Aorta (tissue), 5 donors: ENCODE measurements at regions of chr12 and their contacts with region 1.

Region 1: DNA sequence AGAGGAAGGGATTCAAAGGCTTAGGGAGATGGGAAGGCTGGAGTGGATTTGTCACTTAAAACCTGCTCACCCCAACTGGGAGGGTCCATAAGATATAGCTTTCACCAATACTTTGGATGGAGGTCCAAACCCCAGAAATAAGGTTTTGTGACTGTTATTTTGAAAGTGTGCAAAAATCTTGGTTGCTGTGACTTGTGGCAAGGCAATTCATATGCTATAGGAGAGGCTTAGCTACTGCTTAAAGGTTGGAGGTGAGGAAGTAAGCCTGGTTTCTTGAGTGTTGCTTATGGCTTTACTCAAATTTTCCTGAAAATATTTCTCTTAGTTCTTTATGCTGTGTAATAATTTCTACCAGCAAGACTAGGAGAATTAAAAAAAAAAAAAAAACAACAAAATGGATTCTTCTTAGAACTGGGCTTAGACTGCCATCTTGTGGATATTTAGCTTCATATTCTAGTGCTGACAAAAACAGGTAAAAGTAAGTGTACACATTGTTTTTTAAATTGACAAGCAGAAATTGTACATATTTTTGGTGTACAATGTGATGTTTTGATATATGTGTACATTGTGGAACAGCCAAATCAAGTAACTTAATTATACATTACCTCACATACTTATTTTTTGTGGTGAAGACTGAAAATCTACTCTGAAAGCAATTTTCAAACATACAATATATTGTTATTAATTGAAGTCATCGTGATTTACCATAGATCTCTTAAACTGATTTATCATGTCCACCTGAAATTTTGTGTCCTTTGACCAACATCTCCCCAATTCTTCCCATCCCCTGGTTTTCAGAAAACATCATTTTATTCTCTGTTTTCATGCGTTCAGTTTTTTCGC is 23.0 kb downstream of the PDE6H start:
- DNase-seq: no peak
- ATAC-seq: peak; percentile 82
- H3K4me3 ChIP-seq: no peak overlapping the region
- H3K27ac ChIP-seq: no peak overlapping the region
- H3K4me1 ChIP-seq: no peaks in the 10 kb centered on the region
- H3K27me3 ChIP-seq: no peaks in the 10 kb centered on the region

Region 2: DNA sequence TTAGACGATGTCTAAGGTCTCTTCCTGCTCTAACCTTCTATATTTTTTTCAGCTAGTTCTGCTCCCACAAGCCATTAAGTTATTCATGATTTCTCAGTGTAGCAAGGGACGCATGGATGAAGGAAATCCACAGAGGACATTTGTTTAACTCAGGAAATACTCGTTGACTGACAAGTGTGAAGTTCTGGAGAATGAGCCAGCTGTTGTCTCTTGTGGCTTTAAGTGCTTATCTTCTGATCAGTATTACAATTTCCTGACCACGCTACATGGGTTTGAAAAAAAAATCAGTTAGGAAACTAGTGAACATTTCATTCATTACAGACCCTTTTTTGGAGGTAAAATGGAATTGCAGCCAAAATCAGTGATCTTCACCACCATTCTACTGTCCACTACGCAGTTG is 352.6 kb before region 1 on chr12:
- intact Hi-C with region 1: loop called in 1 of 2 experiments (anchors 10 kb)
- DNase-seq: no peak
- ATAC-seq: no peak
- H3K4me3 ChIP-seq: no peak overlapping the region
- H3K27ac ChIP-seq: no peak overlapping the region
- H3K4me1 ChIP-seq: peaks cover 0 to 4% of the 10 kb centered on the region in 2 donors
- H3K27me3 ChIP-seq: no peaks in the 10 kb centered on the region

Region 3: DNA sequence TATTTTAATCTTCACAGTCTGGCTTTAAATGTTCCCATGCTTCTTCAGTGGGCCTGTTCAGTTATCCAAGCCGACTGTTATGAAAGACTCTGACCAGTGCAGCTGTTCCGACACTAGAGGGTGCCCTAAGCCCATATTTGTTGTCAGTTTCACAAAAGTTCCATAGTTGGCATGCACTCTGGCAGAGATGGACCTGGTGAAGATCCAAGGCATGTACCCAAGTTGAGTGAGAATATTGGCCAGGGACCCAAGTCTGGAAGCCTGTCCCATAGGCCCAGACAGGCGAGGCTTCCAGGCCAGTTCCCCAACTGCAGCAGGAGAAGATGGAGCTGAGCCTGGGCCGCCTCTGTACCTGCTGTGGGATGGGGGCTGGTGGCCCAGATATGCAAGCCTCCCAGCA is 272.0 kb before region 1 on chr12:
- intact Hi-C with region 1: loop called (anchors 5 kb)
- DNase-seq: no peak
- ATAC-seq: peak; percentile 83
- H3K4me3 ChIP-seq: no peak overlapping the region
- H3K27ac ChIP-seq: no peak overlapping the region
- H3K4me1 ChIP-seq: no peaks in the 10 kb centered on the region
- H3K27me3 ChIP-seq: no peaks in the 10 kb centered on the region

Region 4: GRCh38 chr12:14937689-14938088 is 58.1 kb before region 1 on chr12:
- intact Hi-C with region 1: loop called in 1 of 2 experiments (anchors 10 kb)
- DNase-seq: no peak
- ATAC-seq: no peak
- H3K4me3 ChIP-seq: no peak overlapping the region
- H3K27ac ChIP-seq: no peak overlapping the region
- H3K4me1 ChIP-seq: no peaks in the 10 kb centered on the region
- H3K27me3 ChIP-seq: no peaks in the 10 kb centered on the region

Region 5: GRCh38 chr12:15131431-15131830 is 135.6 kb after region 1 on chr12:
- intact Hi-C with region 1: loop called (anchors 5 to 10 kb)
- DNase-seq: no peak
- ATAC-seq: peak; percentile 76
- H3K4me3 ChIP-seq: no peak overlapping the region
- H3K27ac ChIP-seq: no peak overlapping the region
- H3K4me1 ChIP-seq: peaks cover 0 to 1% of the 10 kb centered on the region in 2 donors
- H3K27me3 ChIP-seq: no peaks in the 10 kb centered on the region

Region 6: GRCh38 chr12:15227004-15227679 is 231.3 kb after region 1 on chr12:
- intact Hi-C with region 1: loop called (anchors 5 kb)
- DNase-seq: peak; percentile 71 to 80
- ATAC-seq: peak; percentile 70
- H3K4me3 ChIP-seq: no peak overlapping the region
- H3K27ac ChIP-seq: no peak overlapping the region
- H3K4me1 ChIP-seq: peaks cover 0 to 4% of the 10 kb centered on the region in 2 donors
- H3K27me3 ChIP-seq: no peaks in the 10 kb centered on the region

Region 7: DNA sequence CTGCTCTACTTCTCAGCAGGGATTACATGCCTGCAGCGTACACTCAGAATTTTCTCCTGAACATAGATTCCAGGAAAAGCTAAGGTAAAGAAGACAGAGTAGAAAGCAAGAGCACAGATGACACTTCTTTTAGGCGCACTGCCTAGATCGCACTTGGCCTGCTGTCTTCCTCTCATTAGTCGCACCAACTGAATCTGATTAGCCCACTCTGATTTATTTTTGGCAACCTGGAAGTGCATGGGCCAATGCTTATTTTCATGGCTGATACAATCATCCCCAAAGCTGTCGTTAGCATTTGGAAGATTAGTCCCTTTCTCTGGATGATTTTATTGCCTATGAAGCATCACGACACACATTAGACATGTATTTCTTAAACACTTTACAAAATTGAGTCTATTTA is 479.0 kb after region 1 on chr12:
- intact Hi-C with region 1: no loop called
- DNase-seq: no peak
- ATAC-seq: no peak
- H3K4me3 ChIP-seq: no peak overlapping the region
- H3K27ac ChIP-seq: no peak overlapping the region
- H3K4me1 ChIP-seq: no peaks in the 10 kb centered on the region
- H3K27me3 ChIP-seq: no peaks in the 10 kb centered on the region

Region 8: GRCh38 chr12:15522565-15523187 is 526.9 kb after region 1 on chr12:
- intact Hi-C with region 1: loop called in 1 of 2 experiments (anchors 10 kb)
- DNase-seq: no peak
- ATAC-seq: peak; percentile 74
- H3K4me3 ChIP-seq: no peak overlapping the region
- H3K27ac ChIP-seq: no peak overlapping the region
- H3K4me1 ChIP-seq: no peaks in the 10 kb centered on the region
- H3K27me3 ChIP-seq: no peaks in the 10 kb centered on the region